CD8-positive, alpha-beta T cell (primary cell): ENCODE measurements at regions of chr19 and their contacts with region 1.

Region 1: GRCh38 chr19:45558399-45558878 is 26.2 kb downstream of the OPA3 start:
- DNase-seq: peak; percentile 32 to 89 (median 71)
- ATAC-seq: peak; percentile 99
- H3K4me3 ChIP-seq: no peak overlapping the region
- H3K4me3 Mint-ChIP-seq: no peak overlapping the region
- H3K27ac ChIP-seq: no peak overlapping the region
- H3K27ac Mint-ChIP-seq: no peak overlapping the region
- H3K4me1 ChIP-seq: peaks cover 42% of the 10 kb centered on the region
- H3K4me1 Mint-ChIP-seq: peaks cover 35% of the 10 kb centered on the region
- H3K27me3 ChIP-seq: no peaks in the 10 kb centered on the region
- H3K27me3 Mint-ChIP-seq: no peaks in the 10 kb centered on the region
- CTCF ChIP-seq: peak; percentile 79

Region 2: DNA sequence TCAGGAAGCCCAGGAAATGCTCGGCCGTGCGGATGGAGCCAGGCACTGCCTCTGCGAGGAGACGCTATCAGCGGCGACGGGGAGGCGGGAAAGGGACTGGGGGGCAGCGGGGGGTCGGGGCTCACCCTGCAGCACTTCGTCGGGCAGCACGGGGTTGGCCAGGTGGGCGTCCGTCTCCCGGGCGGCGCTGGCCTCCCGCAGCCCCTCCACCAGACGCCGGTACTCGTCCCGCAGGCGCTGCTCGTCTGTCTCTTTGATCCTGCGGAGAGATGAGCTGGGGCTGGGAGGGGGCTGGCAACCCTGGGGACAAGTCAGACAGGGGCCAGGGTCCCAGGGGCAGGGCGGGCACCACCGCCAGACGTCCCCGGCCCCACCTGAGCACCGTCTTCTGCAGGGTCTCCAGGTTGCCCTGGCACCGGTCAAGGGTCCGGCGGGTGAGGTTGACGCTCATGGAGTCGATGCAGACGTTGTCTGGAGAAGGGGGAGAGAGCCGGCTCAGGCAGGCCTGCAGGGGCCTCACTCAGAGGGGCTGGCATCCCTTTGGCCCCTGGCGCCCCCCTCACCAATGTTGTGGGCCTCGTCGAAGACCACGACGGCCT is 194.5 kb before region 1 on chr19:
- CTCF ChIA-PET with region 1: no interaction called
- POLR2A ChIA-PET with region 1: no interaction called
- intact Hi-C with region 1: no loop called
- DNase-seq: no peak
- ATAC-seq: no peak
- H3K4me3 ChIP-seq: no peak overlapping the region
- H3K4me3 Mint-ChIP-seq: no peak overlapping the region
- H3K27ac ChIP-seq: no peak overlapping the region
- H3K27ac Mint-ChIP-seq: no peak overlapping the region
- H3K4me1 ChIP-seq: no peaks in the 10 kb centered on the region
- H3K4me1 Mint-ChIP-seq: peaks cover 8% of the 10 kb centered on the region
- H3K27me3 ChIP-seq: no peaks in the 10 kb centered on the region
- H3K27me3 Mint-ChIP-seq: no peaks in the 10 kb centered on the region
- CTCF ChIP-seq: no peak

Region 3: GRCh38 chr19:45423589-45424190 is 134.7 kb before region 1 on chr19 and contains the start of gene ERCC1:
- CTCF ChIA-PET with region 1: no interaction called
- POLR2A ChIA-PET with region 1: no interaction called
- intact Hi-C with region 1: loop called in 1 of 2 experiments (anchors 1 kb)
- DNase-seq: peak in 6 of 9 experiments; percentile 35 to 84 (median 48)
- ATAC-seq: peak; percentile 57
- H3K4me3 ChIP-seq: peak within 1 kb of the TSS; percentile 72 to 95
- H3K4me3 Mint-ChIP-seq: peak within 1 kb of the TSS; percentile 93
- H3K27ac ChIP-seq: peak within 1 kb of the TSS; percentile 48 to 88
- H3K27ac Mint-ChIP-seq: peak within 1 kb of the TSS; percentile 90
- H3K4me1 ChIP-seq: peaks cover 32% of the 10 kb centered on the region
- H3K4me1 Mint-ChIP-seq: peaks cover 55% of the 10 kb centered on the region
- H3K27me3 ChIP-seq: no peaks in the 10 kb centered on the region
- H3K27me3 Mint-ChIP-seq: peaks cover 2% of the 10 kb centered on the region
- CTCF ChIP-seq: no peak
- total RNA-seq, gene ERCC1: 28.7 to 31.5 TPM

Region 4: GRCh38 chr19:45496349-45496953 is 62.0 kb before region 1 on chr19:
- CTCF ChIA-PET with region 1: interaction called, 10 read pairs
- POLR2A ChIA-PET with region 1: no interaction called
- intact Hi-C with region 1: loop called (anchors 2 kb)
- DNase-seq: peak in 6 of 9 experiments; percentile 37 to 68 (median 58)
- ATAC-seq: peak; percentile 16
- H3K4me3 ChIP-seq: peak overlapping the region; percentile 57 to 75
- H3K4me3 Mint-ChIP-seq: peak overlapping the region; percentile 74
- H3K27ac ChIP-seq: no peak overlapping the region
- H3K27ac Mint-ChIP-seq: no peak overlapping the region
- H3K4me1 ChIP-seq: peaks cover 45% of the 10 kb centered on the region
- H3K4me1 Mint-ChIP-seq: peaks cover 37% of the 10 kb centered on the region
- H3K27me3 ChIP-seq: peaks cover 0 to 4% of the 10 kb centered on the region in 2 experiments
- H3K27me3 Mint-ChIP-seq: peaks cover 21% of the 10 kb centered on the region
- CTCF ChIP-seq: no peak

Region 5: GRCh38 chr19:45506246-45506990 is 52.0 kb before region 1 on chr19:
- CTCF ChIA-PET with region 1: interaction called, 8 read pairs
- POLR2A ChIA-PET with region 1: no interaction called
- intact Hi-C with region 1: loop called in 1 of 2 experiments (anchors 1 kb)
- DNase-seq: peak; percentile 93 to 99 (median 97)
- ATAC-seq: peak; percentile 79
- H3K4me3 ChIP-seq: peak overlapping the region; percentile 74 to 90
- H3K4me3 Mint-ChIP-seq: peak overlapping the region; percentile 88
- H3K27ac ChIP-seq: peak overlapping the region; percentile 85 to 91
- H3K27ac Mint-ChIP-seq: peak overlapping the region; percentile 93
- H3K4me1 ChIP-seq: peaks cover 33% of the 10 kb centered on the region
- H3K4me1 Mint-ChIP-seq: peaks cover 39% of the 10 kb centered on the region
- H3K27me3 ChIP-seq: no peaks in the 10 kb centered on the region
- H3K27me3 Mint-ChIP-seq: no peaks in the 10 kb centered on the region
- CTCF ChIP-seq: peak; percentile 32

Region 6: GRCh38 chr19:45591004-45591637 is 32.7 kb after region 1 on chr19:
- CTCF ChIA-PET with region 1: no interaction called
- POLR2A ChIA-PET with region 1: no interaction called
- intact Hi-C with region 1: no loop called
- DNase-seq: peak in 6 of 9 experiments; percentile 14 to 49 (median 34)
- ATAC-seq: peak; percentile 63
- H3K4me3 ChIP-seq: no peak overlapping the region
- H3K4me3 Mint-ChIP-seq: no peak overlapping the region
- H3K27ac ChIP-seq: no peak overlapping the region
- H3K27ac Mint-ChIP-seq: no peak overlapping the region
- H3K4me1 ChIP-seq: no peaks in the 10 kb centered on the region
- H3K4me1 Mint-ChIP-seq: no peaks in the 10 kb centered on the region
- H3K27me3 ChIP-seq: peaks cover 0 to 17% of the 10 kb centered on the region in 2 experiments
- H3K27me3 Mint-ChIP-seq: peaks cover 35% of the 10 kb centered on the region
- CTCF ChIP-seq: peak; percentile 31